Left ventricle myocardium inferior (tissue), 1 donor: ENCODE measurements at regions of chr13 and their contacts with region 1.

Region 1: GRCh38 chr13:25574437-25575411 is 202.9 kb downstream of the ATP8A2 start:
- DNase-seq: peak; percentile 56
- H3K4me3 ChIP-seq: no peak overlapping the region
- H3K27ac ChIP-seq: no peak overlapping the region
- H3K4me1 ChIP-seq: no peaks in the 10 kb centered on the region
- H3K27me3 ChIP-seq: peaks cover 84% of the 10 kb centered on the region
- CTCF ChIP-seq: peak; percentile 87

Region 2: DNA sequence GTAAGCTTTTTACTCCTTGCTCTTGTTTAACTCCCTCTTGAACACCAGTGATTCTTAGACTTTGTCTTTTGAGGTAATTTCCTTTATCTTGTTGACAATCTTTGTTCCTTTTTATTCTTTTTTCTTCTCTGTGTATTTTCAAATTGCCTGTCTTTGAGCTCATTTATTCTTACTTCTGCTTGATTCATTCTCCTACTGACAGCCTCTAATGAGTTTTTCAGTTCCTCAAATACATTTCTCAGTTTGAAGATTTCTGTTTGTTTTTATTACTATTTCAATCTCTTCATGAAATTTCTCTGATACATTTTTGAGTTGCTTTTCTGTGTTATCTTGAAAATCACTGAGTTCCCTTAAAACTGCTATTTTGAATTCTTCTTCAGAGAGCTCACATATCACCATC is 48.8 kb before region 1 on chr13:
- intact Hi-C with region 1: no loop called
- DNase-seq: no peak
- H3K4me3 ChIP-seq: no peak overlapping the region
- H3K27ac ChIP-seq: no peak overlapping the region
- H3K4me1 ChIP-seq: no peaks in the 10 kb centered on the region
- H3K27me3 ChIP-seq: peaks cover 12% of the 10 kb centered on the region
- CTCF ChIP-seq: no peak

Region 3: GRCh38 chr13:26074706-26075105 is 500.0 kb after region 1 on chr13:
- intact Hi-C with region 1: loop called (anchors 5 kb)
- DNase-seq: no peak
- H3K4me3 ChIP-seq: no peak overlapping the region
- H3K27ac ChIP-seq: no peak overlapping the region
- H3K4me1 ChIP-seq: no peaks in the 10 kb centered on the region
- H3K27me3 ChIP-seq: peaks cover 60% of the 10 kb centered on the region
- CTCF ChIP-seq: no peak